OCI-LY7 (cell line): ENCODE measurements at regions of chr12 and their contacts with region 1.

Region 1: DNA sequence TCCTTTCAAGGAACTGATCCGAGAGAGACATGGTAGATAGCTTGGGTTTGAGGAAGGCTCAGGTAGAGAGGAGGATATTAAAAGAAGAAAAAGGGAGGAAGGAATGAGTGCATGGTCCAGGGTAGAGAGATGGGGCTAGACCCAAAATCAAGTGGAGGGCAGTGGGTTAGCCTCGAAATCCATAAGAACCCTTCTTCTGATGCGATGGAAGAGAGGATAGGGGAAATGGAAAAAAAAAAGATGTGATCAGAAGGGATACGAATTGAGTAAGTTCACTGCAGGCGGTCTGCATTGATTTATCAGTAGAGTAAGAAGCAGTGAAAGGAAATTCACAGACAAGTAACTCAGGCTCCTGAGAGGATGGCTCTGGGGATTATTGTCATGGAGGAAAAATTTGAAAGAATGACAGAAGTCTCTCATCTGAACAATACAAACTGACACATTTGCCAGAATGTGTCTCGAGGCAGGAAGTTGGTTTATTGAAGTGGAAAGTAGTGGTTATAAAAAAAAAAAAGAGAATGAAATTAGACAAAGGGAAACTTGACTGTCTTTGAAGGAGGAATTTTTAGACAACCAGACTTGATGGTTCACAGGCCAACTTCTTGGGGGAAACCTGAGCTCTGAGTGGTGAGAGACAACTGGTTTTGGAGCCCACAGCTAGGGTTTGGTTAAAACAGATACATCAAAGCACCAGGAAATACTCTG is 10.2 kb downstream of the PPFIBP1 start:
- DNase-seq: peak; percentile 81
- H3K4me3 ChIP-seq: peak overlapping the region; percentile 49
- H3K27ac ChIP-seq: peak overlapping the region; percentile 86
- H3K4me1 ChIP-seq: peaks cover 75% of the 10 kb centered on the region
- CTCF ChIP-seq: no peak

Region 2: DNA sequence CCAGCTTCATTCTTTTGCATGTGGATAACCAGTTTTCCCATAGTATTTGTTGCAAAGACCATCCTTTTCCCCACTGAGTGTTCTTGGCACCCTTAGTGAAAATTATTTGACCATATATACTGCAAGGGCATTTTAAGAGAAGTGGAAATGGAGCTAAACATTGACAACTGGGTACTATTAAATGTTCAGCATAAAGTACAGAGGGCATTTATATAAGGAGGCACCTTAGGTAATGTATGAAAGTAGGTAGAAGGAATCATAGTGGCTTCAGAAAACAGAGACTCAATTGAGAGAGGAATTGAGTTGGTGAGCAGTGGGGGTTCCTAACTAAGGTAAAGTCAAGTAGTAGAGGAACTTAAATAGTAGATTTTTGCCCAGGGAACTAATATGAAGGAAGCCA is 122.2 kb before region 1 on chr12:
- CTCF ChIA-PET with region 1: no interaction called
- POLR2A ChIA-PET with region 1: no interaction called
- intact Hi-C with region 1: no loop called
- DNase-seq: no peak
- H3K4me3 ChIP-seq: no peak overlapping the region
- H3K27ac ChIP-seq: no peak overlapping the region
- H3K4me1 ChIP-seq: no peaks in the 10 kb centered on the region
- CTCF ChIP-seq: no peak

Region 3: DNA sequence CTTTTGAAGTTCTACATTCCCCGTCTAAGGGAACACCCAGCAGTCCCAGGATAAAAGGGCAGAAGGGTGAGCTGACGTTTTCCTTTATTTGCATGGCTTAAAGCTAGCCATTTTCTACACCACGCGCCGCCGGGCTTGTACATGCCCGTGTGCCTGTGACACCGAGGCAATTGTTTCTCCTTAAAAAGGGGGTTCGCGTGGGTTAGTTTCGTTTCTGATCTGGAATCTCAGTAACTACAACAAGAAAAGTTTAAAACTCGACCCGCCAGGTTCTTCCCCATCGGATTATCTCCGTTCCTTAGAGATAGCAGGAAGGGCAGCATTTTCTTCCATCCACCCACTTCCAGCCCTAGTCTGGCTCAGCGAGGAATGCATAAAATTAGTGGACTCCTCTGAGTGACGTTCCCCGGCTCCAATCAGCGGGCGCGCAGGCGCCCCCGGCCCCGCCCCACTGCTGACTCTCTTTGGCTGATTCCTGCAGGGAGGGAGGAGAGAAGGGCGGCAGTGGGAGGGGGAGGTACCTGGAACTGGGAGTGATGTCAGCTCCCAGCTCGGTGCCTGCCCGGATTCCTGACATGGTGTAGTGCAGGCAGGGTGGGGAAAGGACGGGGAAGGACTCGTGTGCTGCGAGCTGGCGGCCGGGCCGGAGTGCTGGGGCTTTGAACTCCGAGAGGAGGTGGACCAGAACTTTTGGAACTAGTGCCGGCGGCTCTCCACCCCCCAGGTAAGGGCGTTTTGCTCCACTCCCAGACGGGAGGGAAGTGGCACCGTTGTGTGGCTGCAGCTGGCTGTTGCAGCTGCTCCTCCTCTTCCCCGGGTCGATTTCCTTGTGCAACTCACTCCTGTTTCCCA is 10.3 kb before region 1 on chr12 and contains the start of gene PPFIBP1:
- CTCF ChIA-PET with region 1: interaction called, 3 read pairs
- POLR2A ChIA-PET with region 1: interaction called, 12 read pairs
- intact Hi-C with region 1: no loop called
- DNase-seq: peak; percentile 91
- H3K4me3 ChIP-seq: peak within 1 kb of the TSS; percentile 88
- H3K27ac ChIP-seq: peak within 1 kb of the TSS; percentile 22
- H3K4me1 ChIP-seq: peaks cover 18% of the 10 kb centered on the region
- CTCF ChIP-seq: no peak
- total RNA-seq, gene PPFIBP1: 7.3 and 12.7 TPM in 2 replicates